ENCODE measurements at regions of chrX and their contacts with region 1.

Region 1: GRCh38 chrX:2665387-2666304 is 25.4 kb upstream of the CD99 start:
- DNase-seq: peak; percentile 26 to 60
- H3K4me3 ChIP-seq: no peak overlapping the region
- H3K4me3 Mint-ChIP-seq: peak overlapping the region; percentile 36
- H3K27ac Mint-ChIP-seq: peak overlapping the region; percentile 60
- H3K4me1 ChIP-seq: peaks cover 27% of the 10 kb centered on the region
- H3K4me1 Mint-ChIP-seq: peaks cover 18% of the 10 kb centered on the region
- H3K27me3 ChIP-seq: no peaks in the 10 kb centered on the region
- H3K27me3 Mint-ChIP-seq: no peaks in the 10 kb centered on the region
- CTCF ChIP-seq: no peak

Region 2: DNA sequence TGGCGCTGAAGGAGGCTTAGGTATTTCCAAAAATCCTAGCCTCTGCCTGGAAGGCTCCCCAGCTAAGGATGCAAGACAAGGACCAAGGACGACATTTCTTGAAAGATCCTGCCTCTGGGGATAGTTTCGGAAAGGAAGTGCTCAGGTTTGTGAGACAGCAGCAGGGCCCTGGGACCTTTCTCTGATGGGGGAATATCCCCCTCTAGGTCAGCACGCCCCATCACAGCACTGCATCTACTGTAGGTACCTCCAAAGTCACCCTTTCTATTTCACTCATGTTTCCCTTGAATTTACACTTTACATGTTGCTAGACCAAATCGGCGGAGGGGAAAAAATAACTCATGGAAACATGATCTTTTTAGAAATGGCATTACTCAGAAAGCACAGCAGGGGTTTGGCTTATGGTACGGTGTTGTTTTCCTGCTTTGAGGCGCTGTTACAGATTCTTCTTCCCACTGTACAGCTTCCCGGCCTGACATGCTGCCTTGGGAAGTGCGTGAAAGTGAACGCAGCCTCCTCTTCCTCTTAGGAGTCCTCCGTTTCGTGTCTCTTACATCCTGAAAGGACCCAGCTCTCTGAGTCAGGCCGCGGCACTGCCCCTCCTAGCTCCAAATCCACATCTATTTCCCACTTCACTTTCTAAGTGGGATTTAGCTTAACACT is 87.7 kb before region 1 on chrX:
- CTCF ChIA-PET with region 1: no interaction called
- POLR2A ChIA-PET with region 1: no interaction called
- intact Hi-C with region 1: no loop called
- DNase-seq: no peak
- H3K4me3 ChIP-seq: no peak overlapping the region
- H3K4me3 Mint-ChIP-seq: no peak overlapping the region
- H3K27ac Mint-ChIP-seq: no peak overlapping the region
- H3K4me1 ChIP-seq: no peaks in the 10 kb centered on the region
- H3K4me1 Mint-ChIP-seq: peaks cover 6% of the 10 kb centered on the region
- H3K27me3 ChIP-seq: no peaks in the 10 kb centered on the region
- H3K27me3 Mint-ChIP-seq: no peaks in the 10 kb centered on the region
- CTCF ChIP-seq: no peak

Region 3: GRCh38 chrX:2677764-2678163 is 12.1 kb after region 1 on chrX:
- CTCF ChIA-PET with region 1: no interaction called
- POLR2A ChIA-PET with region 1: no interaction called
- intact Hi-C with region 1: loop called (anchors 1 kb)
- DNase-seq: peak in 1 of 2 experiments; percentile 49
- H3K4me3 ChIP-seq: no peak overlapping the region
- H3K4me3 Mint-ChIP-seq: no peak overlapping the region
- H3K27ac Mint-ChIP-seq: peak overlapping the region; percentile 3
- H3K4me1 ChIP-seq: peaks cover 25% of the 10 kb centered on the region
- H3K4me1 Mint-ChIP-seq: peaks cover 17% of the 10 kb centered on the region
- H3K27me3 ChIP-seq: no peaks in the 10 kb centered on the region
- H3K27me3 Mint-ChIP-seq: no peaks in the 10 kb centered on the region
- CTCF ChIP-seq: no peak

Region 4: GRCh38 chrX:2811271-2811670 is 145.6 kb after region 1 on chrX:
- CTCF ChIA-PET with region 1: no interaction called
- POLR2A ChIA-PET with region 1: no interaction called
- intact Hi-C with region 1: no loop called
- DNase-seq: no peak
- H3K4me3 ChIP-seq: no peak overlapping the region
- H3K4me3 Mint-ChIP-seq: no peak overlapping the region
- H3K27ac Mint-ChIP-seq: no peak overlapping the region
- H3K4me1 ChIP-seq: no peaks in the 10 kb centered on the region
- H3K4me1 Mint-ChIP-seq: no peaks in the 10 kb centered on the region
- H3K27me3 ChIP-seq: no peaks in the 10 kb centered on the region
- H3K27me3 Mint-ChIP-seq: no peaks in the 10 kb centered on the region
- CTCF ChIP-seq: no peak

Measured in Caco-2 (cell line).